ENCODE measurements at regions of chr4 and their contacts with region 1.

Region 1: DNA sequence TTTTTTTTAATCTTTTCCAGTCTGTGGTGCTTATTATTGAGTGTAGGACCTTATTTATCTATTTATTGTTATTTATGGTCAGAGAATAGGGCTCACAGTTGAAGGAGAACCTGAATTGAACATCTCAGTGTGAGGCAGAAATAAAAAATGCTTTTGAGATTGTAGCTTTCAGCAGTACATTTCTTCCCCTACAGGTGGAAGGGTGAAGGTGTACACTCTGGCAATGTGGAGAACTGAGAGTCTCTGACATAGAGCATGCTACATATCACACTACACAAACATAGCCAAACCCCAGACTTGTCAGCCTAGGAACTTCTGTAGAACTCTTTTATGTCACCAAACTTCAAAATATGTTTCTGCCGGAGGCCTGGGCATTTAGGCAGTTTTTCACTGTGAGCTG is 140.2 kb downstream of the STIM2 start:
- DNase-seq: no peak

Region 2: DNA sequence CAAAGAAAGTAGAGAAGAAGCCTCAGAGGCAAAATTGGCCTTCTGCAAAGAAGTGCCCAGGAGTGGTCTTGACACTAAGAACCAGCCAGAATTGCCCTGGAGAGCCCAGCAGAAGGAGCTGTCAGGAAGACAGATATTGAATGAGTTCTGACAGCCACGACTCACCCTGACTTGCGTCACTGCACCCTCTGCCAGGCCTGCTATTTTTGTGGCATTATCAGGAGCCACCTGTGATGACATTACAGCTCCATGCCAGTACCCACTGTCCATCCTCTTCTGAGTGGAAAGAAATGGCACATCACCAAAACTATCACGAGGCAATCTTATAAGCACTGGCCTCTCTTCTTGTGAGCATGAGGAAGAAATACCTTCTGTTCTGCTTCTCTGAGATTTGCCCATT is 1019.1 kb before region 1 on chr4:
- intact Hi-C with region 1: loop called (anchors 10 kb)
- DNase-seq: no peak

Region 3: GRCh38 chr4:27084685-27085361 is 84.0 kb after region 1 on chr4:
- intact Hi-C with region 1: no loop called
- DNase-seq: peak; percentile 50 to 94 (median 70)